ENCODE measurements at regions of chr7 and their contacts with region 1.

Region 1: GRCh38 chr7:55073945-55074499 is 55.2 kb downstream of the EGFR start:
- DNase-seq: peak; percentile 88 to 93 (median 90)
- ATAC-seq: peak; percentile 84
- H3K4me3 ChIP-seq: no peak overlapping the region
- H3K4me1 ChIP-seq: peaks cover 75% of the 10 kb centered on the region
- CTCF ChIP-seq: no peak

Region 2: DNA sequence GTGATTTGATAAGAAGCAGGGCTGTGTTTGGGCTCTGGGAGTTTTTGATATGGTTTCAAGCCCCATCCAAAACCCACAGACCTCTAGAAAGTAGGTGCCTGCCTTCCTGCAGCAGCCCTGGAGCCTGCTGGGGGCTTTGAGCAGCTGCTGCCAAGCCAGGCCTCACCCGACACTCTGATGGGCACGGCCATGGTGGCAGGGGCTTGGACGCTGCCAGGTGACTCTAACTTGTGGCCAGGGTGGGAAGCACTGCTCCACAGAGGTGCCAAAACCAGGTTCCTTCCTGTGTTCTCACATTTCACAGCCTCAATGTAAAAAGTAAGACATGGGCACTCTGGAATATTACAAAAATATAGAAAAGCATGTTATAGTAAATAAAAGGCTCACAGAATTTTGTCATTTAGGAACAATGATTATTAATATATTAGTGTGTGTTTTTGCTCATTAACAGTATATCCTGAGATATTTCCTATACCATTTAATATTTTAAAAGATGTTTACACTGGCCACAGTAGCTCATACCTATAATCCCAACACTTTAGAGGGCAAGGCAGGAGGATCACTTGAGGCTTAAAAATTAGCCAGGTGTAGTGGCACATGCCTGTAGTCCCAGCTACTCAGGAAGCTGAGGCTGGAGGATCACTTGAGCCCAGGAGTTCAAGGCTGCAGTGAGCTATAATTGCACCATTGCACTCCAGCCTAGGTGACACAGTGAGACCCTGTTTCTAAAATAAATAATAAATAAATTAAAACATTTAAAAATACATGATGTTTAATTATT is 39.9 kb after region 1 on chr7:
- intact Hi-C with region 1: no loop called
- DNase-seq: no peak
- ATAC-seq: no peak
- H3K4me3 ChIP-seq: no peak overlapping the region
- H3K4me1 ChIP-seq: no peaks in the 10 kb centered on the region
- CTCF ChIP-seq: no peak

Region 3: GRCh38 chr7:55129531-55130394 is 55.7 kb after region 1 on chr7:
- intact Hi-C with region 1: loop called in 1 of 2 experiments (anchors 10 kb)
- DNase-seq: peak in 1 of 3 donors; percentile 55
- ATAC-seq: peak; percentile 61
- H3K4me3 ChIP-seq: no peak overlapping the region
- H3K4me1 ChIP-seq: peaks cover 49% of the 10 kb centered on the region
- CTCF ChIP-seq: no peak